ENCODE measurements at regions of chr3 and their contacts with region 1.

Region 1: GRCh38 chr3:160003520-160004128 is 15.0 kb downstream of the IL12A start:
- DNase-seq: peak; percentile 28 to 81 (median 68)
- H3K4me3 ChIP-seq: peak overlapping the region in 8 of 59 donors; percentile 11 to 39 (median 23)
- H3K27ac ChIP-seq: peak overlapping the region in 10 of 59 donors; percentile 1 to 63 (median 34)
- H3K27me3 ChIP-seq: no peaks in the 10 kb centered on the region
- CTCF ChIP-seq: peak in 55 of 56 donors; percentile 28 to 90 (median 72)

Region 2: GRCh38 chr3:158845765-158846350 is 1157.8 kb before region 1 on chr3:
- intact Hi-C with region 1: loop called in 1 of 2 experiments (anchors 10 kb)
- DNase-seq: peak in 1 of 10 donors; percentile 9
- H3K4me3 ChIP-seq: no peak overlapping the region
- H3K27ac ChIP-seq: no peak overlapping the region
- H3K27me3 ChIP-seq: no peaks in the 10 kb centered on the region
- CTCF ChIP-seq: peak; percentile 59 to 87 (median 73)

Region 3: DNA sequence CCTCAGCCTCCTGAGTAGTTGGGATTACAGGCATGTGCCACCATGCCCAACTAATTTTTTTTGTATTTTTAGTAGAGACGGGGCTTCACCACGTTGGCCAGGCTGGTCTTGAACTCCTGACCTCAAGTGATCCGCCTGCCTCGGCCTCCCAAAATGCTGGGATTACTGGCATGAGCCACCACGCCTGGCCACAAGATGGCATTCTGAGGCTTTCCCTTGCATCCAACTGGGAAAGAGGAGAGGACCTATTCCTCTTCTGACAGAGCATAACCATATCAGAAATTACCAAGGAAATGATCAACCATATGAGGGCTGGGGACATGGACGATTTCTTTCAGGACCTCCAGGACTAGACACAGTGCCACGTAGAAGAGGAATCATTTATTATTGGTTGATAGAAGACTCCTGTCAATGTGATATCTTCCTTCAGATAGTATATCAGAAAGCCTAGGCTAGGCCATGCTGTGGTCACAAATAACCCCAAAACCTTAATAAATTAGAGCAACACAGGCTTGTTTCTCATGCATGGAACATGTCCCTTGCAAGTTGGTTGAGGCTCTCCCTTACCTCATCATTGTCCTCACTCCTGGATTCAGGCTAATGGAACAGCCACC is 387.3 kb before region 1 on chr3:
- intact Hi-C with region 1: loop called (anchors 5 to 10 kb)
- DNase-seq: peak in 6 of 10 donors; percentile 21 to 51 (median 34)
- H3K4me3 ChIP-seq: no peak overlapping the region
- H3K27ac ChIP-seq: no peak overlapping the region
- H3K27me3 ChIP-seq: no peaks in the 10 kb centered on the region
- CTCF ChIP-seq: peak in 55 of 56 donors; percentile 17 to 72 (median 54)

Region 4: GRCh38 chr3:159804726-159805410 is 198.8 kb before region 1 on chr3:
- intact Hi-C with region 1: loop called in 1 of 2 experiments (anchors 5 kb)
- DNase-seq: peak in 9 of 10 donors; percentile 65 to 89 (median 81)
- H3K4me3 ChIP-seq: peak overlapping the region in 3 of 59 donors; percentile 5 to 10 (median 6)
- H3K27ac ChIP-seq: peak overlapping the region in 53 of 59 donors; percentile 6 to 98 (median 64)
- H3K27me3 ChIP-seq: no peaks in the 10 kb centered on the region
- CTCF ChIP-seq: peak; percentile 67 to 96 (median 90)

Region 5: GRCh38 chr3:159818399-159818798 is 185.2 kb before region 1 on chr3:
- intact Hi-C with region 1: loop called (anchors 5 kb)
- DNase-seq: peak in 7 of 10 donors; percentile 21 to 56 (median 50)
- H3K4me3 ChIP-seq: no peak overlapping the region
- H3K27ac ChIP-seq: peak overlapping the region in 27 of 59 donors; percentile 3 to 70 (median 47)
- H3K27me3 ChIP-seq: no peaks in the 10 kb centered on the region
- CTCF ChIP-seq: peak in 49 of 56 donors; percentile 8 to 74 (median 40)

Region 6: GRCh38 chr3:159828542-159828943 is 175.1 kb before region 1 on chr3:
- intact Hi-C with region 1: loop called in 1 of 2 experiments (anchors 5 kb)
- DNase-seq: no peak
- H3K4me3 ChIP-seq: peak overlapping the region in 20 of 59 donors; percentile 3 to 39 (median 12)
- H3K27ac ChIP-seq: peak overlapping the region in 48 of 59 donors; percentile 0 to 80 (median 56)
- H3K27me3 ChIP-seq: no peaks in the 10 kb centered on the region
- CTCF ChIP-seq: peak; percentile 52 to 84 (median 70)

Region 7: DNA sequence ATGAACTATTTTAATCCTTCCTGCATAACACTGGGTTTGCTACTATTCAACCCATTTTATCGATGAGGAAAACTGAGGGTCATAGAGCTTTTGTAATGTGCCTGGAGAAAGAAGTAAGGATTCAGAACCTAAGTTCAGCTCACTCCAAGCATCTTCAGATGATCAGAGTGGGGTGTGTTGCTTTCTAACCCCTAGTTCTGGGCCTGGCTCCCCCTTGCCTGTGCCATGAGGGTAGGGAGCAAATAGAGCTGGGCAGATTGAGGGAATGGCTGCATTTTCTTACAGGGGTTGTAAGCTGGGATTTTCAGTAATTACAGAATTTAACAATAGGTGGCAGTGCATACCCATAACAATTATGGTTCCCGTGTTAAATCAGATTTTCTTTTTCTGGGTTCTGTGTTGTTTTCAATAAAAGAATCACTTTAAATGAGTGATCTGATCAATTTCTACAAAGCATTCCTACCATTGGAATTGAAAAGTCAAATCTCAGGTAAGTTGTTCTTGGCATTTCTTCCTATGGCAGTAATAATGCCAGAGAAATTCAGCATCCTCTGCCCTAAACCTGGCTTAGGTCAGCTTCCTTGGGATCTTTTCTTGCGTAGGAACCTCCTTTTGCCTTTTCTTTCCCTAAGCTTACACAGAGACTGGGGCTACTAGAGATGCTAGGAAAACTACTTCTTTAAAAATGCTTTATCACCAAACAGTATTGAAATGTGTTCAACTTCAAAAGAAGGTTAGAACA is 118.8 kb before region 1 on chr3:
- intact Hi-C with region 1: loop called (anchors 2 to 5 kb)
- DNase-seq: no peak
- H3K4me3 ChIP-seq: peak overlapping the region in 6 of 59 donors; percentile 4 to 17 (median 9)
- H3K27ac ChIP-seq: peak overlapping the region in 58 of 59 donors; percentile 11 to 98 (median 82)
- H3K27me3 ChIP-seq: no peaks in the 10 kb centered on the region
- CTCF ChIP-seq: peak; percentile 31 to 87 (median 71)

Region 8: DNA sequence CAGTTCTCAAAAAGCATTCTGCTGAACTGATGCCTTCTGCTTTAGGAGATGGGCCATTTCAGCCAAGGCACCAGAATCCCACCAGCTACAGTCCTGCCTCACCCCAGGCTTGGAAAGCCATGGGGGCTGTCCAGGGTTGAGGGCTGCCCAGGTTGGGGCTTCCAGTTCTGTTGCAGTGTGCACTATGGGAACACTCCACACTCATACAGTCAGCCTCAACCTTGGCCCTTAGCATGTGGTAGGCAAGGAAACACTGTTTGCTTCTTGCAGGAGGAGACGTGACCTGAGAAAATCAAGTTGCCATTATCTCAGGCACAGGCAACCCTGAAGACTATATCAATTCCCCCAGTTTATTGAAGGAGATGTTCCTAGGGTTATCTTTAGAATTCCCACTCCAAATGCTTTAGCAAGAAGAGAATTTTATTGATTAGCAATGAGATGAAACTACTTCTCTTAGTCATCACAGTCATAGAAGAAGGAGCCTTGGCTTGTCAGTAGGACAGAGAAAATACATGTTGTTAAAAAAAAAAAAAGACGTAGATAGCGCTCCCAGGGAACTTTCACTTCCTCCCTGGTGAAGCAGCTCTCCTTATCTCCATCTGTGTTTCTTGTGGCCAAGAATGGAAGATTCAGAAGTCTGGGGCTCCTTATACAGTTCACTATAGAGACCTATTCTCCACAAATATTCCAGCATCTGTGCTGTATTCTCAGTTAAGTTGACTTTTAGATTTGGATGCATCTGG is 53.3 kb before region 1 on chr3:
- intact Hi-C with region 1: no loop called
- DNase-seq: no peak
- H3K4me3 ChIP-seq: no peak overlapping the region
- H3K27ac ChIP-seq: no peak overlapping the region
- H3K27me3 ChIP-seq: no peaks in the 10 kb centered on the region
- CTCF ChIP-seq: no peak

Measured in dorsolateral prefrontal cortex (tissue), 120 donors.